ENCODE measurements at regions of chr6 and their contacts with region 1.

Region 1: DNA sequence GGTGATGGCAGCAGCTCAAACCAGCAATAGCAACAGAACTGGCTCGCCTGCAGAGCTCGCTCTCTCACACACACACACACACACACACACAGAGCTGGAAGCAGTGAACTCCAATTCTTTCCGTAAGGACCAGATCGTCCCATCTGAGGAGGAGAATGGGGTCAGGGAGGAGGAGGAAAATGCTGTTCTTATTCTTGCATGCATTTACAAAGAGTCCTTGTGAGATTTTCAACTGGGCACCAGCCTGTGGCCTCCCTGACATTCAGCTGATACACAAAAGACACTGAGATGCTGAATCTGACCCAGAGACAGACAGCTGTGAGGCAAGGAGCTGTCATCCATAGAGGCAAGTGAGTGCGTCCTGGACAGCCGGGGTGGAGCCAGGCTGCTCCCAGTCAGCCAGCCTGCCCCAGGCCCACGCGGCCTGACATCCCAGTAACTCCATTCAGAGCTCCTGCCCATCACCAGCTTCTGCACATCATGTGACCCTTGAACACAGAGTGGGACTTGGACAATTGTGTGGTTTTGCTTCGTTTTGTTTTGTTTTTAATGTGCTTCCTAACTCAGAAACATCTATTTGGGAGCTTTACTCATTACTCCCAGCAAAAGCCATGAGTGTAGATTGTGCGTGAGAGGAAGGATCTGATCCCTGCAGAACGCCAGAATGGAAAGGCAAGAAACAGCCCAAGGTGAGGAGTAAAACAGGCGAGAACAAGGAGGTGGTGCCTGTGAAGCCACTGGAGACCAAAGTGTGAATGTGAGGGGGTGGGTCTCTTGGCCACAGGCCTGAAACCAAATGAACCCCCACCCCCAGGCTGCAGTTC is 2.1 kb downstream of the SERPINB9 start:
- DNase-seq: no peak
- ATAC-seq: no peak
- H3K4me3 ChIP-seq: no peak overlapping the region
- H3K27ac ChIP-seq: no peak overlapping the region
- H3K4me1 ChIP-seq: peaks cover 28 to 30% of the 10 kb centered on the region in 2 experiments; a peak in 4 of 5 replicates
- H3K27me3 ChIP-seq: no peaks in the 10 kb centered on the region
- CTCF ChIP-seq: no peak
- EP300 ChIP-seq: no peak
- POLR2A ChIP-seq: no peak
- RAD21 ChIP-seq: no peak

Region 2: DNA sequence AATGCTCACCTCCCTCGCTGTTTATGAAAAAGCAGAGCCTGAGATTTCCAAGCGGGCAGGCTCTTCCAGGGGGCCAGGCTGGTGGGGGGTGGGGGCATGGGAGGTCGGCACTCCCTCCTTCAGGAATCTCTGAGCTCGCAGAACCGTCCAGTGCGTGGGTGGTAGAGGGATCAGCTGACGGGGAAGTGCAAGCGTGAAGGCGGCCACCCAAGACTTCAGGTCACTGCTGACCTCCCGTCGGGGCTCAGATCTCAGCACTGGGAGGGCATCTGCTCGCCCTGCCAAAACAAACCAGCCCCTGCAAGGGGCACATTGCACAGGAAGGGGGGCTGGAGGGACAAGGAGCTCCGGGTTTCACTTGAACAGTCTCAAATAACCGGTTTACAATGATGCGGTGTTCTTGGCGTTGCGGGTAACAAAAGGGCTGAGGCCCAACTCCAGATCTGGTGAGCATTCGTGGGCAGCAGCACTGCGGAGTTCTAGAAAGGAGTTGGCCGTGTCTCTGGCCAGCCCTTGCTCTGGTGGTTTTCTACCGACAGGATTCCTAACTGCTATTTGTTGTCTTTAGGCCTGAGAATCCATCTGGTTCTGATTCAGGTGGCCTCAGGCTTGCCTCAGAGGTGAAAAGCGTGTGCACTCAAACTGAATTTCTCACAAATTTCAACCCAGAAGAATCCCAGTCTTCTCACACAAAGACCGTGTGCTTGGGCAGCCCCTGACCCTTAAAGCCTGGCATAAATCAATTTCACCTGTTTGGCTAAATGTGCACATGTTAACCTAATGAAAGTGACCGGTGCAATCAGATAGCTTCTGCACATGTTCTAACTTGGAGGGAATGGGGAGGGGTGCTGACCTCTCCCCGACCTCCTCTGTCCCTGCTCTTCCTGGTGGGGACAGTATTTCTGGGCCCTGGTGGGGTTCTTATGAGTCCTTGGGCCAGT is 341.9 kb before region 1 on chr6:
- CTCF ChIA-PET with region 1: no interaction called
- POLR2A ChIA-PET with region 1: no interaction called
- in situ Hi-C with region 1: no loop called
- intact Hi-C with region 1: no loop called
- DNase-seq: no peak
- ATAC-seq: no peak
- H3K4me3 ChIP-seq: no peak overlapping the region
- H3K27ac ChIP-seq: no peak overlapping the region
- H3K4me1 ChIP-seq: no peaks in the 10 kb centered on the region
- H3K27me3 ChIP-seq: peaks cover 24 to 45% of the 10 kb centered on the region in 2 experiments
- CTCF ChIP-seq: no peak
- EP300 ChIP-seq: no peak
- POLR2A ChIP-seq: no peak
- RAD21 ChIP-seq: no peak

Region 3: GRCh38 chr6:2857580-2858337 is 43.3 kb before region 1 on chr6:
- CTCF ChIA-PET with region 1: no interaction called
- POLR2A ChIA-PET with region 1: interaction called, 17 read pairs
- in situ Hi-C with region 1: loop called (anchors 5 kb)
- intact Hi-C with region 1: loop called (anchors 1 kb)
- DNase-seq: peak; percentile 79 to 96 (median 86)
- ATAC-seq: peak; percentile 86
- H3K4me3 ChIP-seq: peak overlapping the region; percentile 22
- H3K27ac ChIP-seq: peak overlapping the region; percentile 98
- H3K4me1 ChIP-seq: peaks cover 48 to 67% of the 10 kb centered on the region in 2 experiments
- H3K27me3 ChIP-seq: no peaks in the 10 kb centered on the region
- CTCF ChIP-seq: 0 out of 6 replicates have a peak, but pooled peaks of 1 of the 3 experiments have one; percentile 8
- EP300 ChIP-seq: peak; percentile 87
- POLR2A ChIP-seq: peak; percentile 78
- RAD21 ChIP-seq: no peak; a peak in 1 of 4 replicates

Region 4: GRCh38 chr6:2866181-2866846 is 34.7 kb before region 1 on chr6:
- CTCF ChIA-PET with region 1: no interaction called
- POLR2A ChIA-PET with region 1: interaction called, 12 read pairs
- in situ Hi-C with region 1: no loop called
- intact Hi-C with region 1: no loop called
- DNase-seq: no peak
- ATAC-seq: no peak; the same call in 2 of the 3 replicates
- H3K4me3 ChIP-seq: no peak overlapping the region
- H3K27ac ChIP-seq: no peak overlapping the region
- H3K4me1 ChIP-seq: peaks cover 0 to 7% of the 10 kb centered on the region in 2 experiments; a peak in 1 of 5 replicates
- H3K27me3 ChIP-seq: no peaks in the 10 kb centered on the region
- CTCF ChIP-seq: no peak
- EP300 ChIP-seq: no peak
- POLR2A ChIP-seq: no peak
- RAD21 ChIP-seq: peak in 1 of 2 experiments; percentile 27; a peak in 1 of 4 replicates

Region 5: GRCh38 chr6:2883673-2884072 is 17.4 kb before region 1 on chr6:
- CTCF ChIA-PET with region 1: no interaction called
- POLR2A ChIA-PET with region 1: interaction called, 15 read pairs
- in situ Hi-C with region 1: no loop called
- intact Hi-C with region 1: no loop called
- DNase-seq: no peak
- ATAC-seq: no peak; the same call in 1 of the 3 replicates
- H3K4me3 ChIP-seq: no peak overlapping the region
- H3K27ac ChIP-seq: no peak overlapping the region
- H3K4me1 ChIP-seq: no peaks in the 10 kb centered on the region
- H3K27me3 ChIP-seq: no peaks in the 10 kb centered on the region
- CTCF ChIP-seq: no peak
- EP300 ChIP-seq: no peak
- POLR2A ChIP-seq: no peak
- RAD21 ChIP-seq: no peak

Region 6: GRCh38 chr6:2911171-2911570 is 10.1 kb after region 1 on chr6:
- CTCF ChIA-PET with region 1: no interaction called
- POLR2A ChIA-PET with region 1: interaction called, 15 read pairs
- in situ Hi-C with region 1: no loop called
- intact Hi-C with region 1: no loop called
- DNase-seq: no peak
- ATAC-seq: no peak
- H3K4me3 ChIP-seq: no peak overlapping the region
- H3K27ac ChIP-seq: no peak overlapping the region
- H3K4me1 ChIP-seq: peaks cover 5 to 6% of the 10 kb centered on the region in 2 experiments; a peak in 4 of 5 replicates
- H3K27me3 ChIP-seq: no peaks in the 10 kb centered on the region
- CTCF ChIP-seq: no peak
- EP300 ChIP-seq: no peak
- POLR2A ChIP-seq: no peak
- RAD21 ChIP-seq: no peak

Region 7: GRCh38 chr6:2931970-2932748 is 31.1 kb after region 1 on chr6:
- CTCF ChIA-PET with region 1: no interaction called
- POLR2A ChIA-PET with region 1: interaction called, 14 read pairs
- in situ Hi-C with region 1: no loop called
- intact Hi-C with region 1: no loop called
- DNase-seq: peak; percentile 94 to 97 (median 94)
- ATAC-seq: peak; percentile 99
- H3K4me3 ChIP-seq: no peak overlapping the region
- H3K27ac ChIP-seq: 0 out of 3 replicates have a peak overlapping the region, but pooled peaks have one; percentile 2
- H3K4me1 ChIP-seq: peaks cover 9 to 13% of the 10 kb centered on the region in 2 experiments; a peak in 4 of 5 replicates
- H3K27me3 ChIP-seq: no peaks in the 10 kb centered on the region
- CTCF ChIP-seq: peak; percentile 98 to 100 (median 99)
- EP300 ChIP-seq: peak; percentile 97
- POLR2A ChIP-seq: no peak
- RAD21 ChIP-seq: peak; percentile 98

Region 8: GRCh38 chr6:2947445-2947844 is 46.4 kb after region 1 on chr6:
- CTCF ChIA-PET with region 1: no interaction called
- POLR2A ChIA-PET with region 1: no interaction called
- in situ Hi-C with region 1: no loop called
- intact Hi-C with region 1: no loop called
- DNase-seq: no peak
- ATAC-seq: no peak
- H3K4me3 ChIP-seq: no peak overlapping the region
- H3K27ac ChIP-seq: no peak overlapping the region
- H3K4me1 ChIP-seq: peaks cover 27 to 29% of the 10 kb centered on the region in 2 experiments
- H3K27me3 ChIP-seq: no peaks in the 10 kb centered on the region
- CTCF ChIP-seq: no peak
- EP300 ChIP-seq: no peak
- POLR2A ChIP-seq: no peak
- RAD21 ChIP-seq: no peak